Transverse colon (tissue), 4 donors: ENCODE measurements at regions of chr1 and their contacts with region 1.

Region 1: GRCh38 chr1:165257969-165258459 is 98.5 kb downstream of the LMX1A start:
- DNase-seq: peak; percentile 82
- H3K4me3 ChIP-seq: no peak overlapping the region
- H3K27ac ChIP-seq: no peak overlapping the region
- H3K4me1 ChIP-seq: no peaks in the 10 kb centered on the region
- H3K27me3 ChIP-seq: no peaks in the 10 kb centered on the region
- CTCF ChIP-seq: peak; percentile 60 to 81 (median 70)
- EP300 ChIP-seq: no peak
- POLR2A ChIP-seq: no peak

Region 2: DNA sequence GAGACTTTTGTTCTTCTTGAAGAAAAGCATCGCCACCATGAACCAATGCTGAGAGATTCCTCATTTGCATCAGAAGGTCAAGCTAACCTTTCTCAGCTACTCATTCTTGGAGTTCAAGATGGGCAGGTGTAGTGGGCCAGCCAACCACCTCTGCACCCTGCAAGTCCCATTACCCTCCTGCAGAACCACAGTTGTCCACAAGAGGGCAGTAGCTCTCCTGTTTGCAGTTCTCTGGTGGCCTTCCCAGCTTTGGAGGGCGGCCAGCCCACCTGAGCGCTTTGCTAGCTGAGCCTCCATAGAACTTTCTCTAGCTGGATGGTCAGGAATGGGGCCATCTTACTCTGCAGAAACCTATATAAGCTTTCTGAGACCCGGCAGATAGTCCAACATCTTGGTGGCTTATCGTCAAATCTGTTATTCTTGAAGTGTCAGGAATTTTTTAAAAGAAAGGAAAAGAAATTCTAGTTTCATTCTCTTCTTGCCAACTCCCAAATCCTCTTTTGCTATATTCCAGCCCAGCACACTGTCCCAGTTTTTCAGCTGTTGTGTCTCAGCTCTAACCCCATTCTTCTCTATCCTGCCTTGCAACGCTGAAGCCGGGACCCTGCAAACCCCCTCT is 109.5 kb after region 1 on chr1:
- in situ Hi-C with region 1: loop called in 1 of 4 experiments (anchors 10 kb)
- intact Hi-C with region 1: no loop called
- DNase-seq: peak; percentile 83
- H3K4me3 ChIP-seq: no peak overlapping the region
- H3K27ac ChIP-seq: no peak overlapping the region
- H3K4me1 ChIP-seq: no peaks in the 10 kb centered on the region
- H3K27me3 ChIP-seq: peaks cover 26% of the 10 kb centered on the region
- CTCF ChIP-seq: peak; percentile 80 to 97 (median 94)
- EP300 ChIP-seq: no peak
- POLR2A ChIP-seq: no peak